Ascending aorta (tissue), 2 donors: ENCODE measurements at regions of chrX and their contacts with region 1.

Region 1: GRCh38 chrX:83630662-83631061 is 122.6 kb downstream of the POU3F4 start:
- DNase-seq: no peak
- H3K4me3 ChIP-seq: no peak overlapping the region
- H3K27ac ChIP-seq: no peak overlapping the region
- H3K4me1 ChIP-seq: no peaks in the 10 kb centered on the region
- H3K27me3 ChIP-seq: no peaks in the 10 kb centered on the region
- CTCF ChIP-seq: no peak

Region 2: DNA sequence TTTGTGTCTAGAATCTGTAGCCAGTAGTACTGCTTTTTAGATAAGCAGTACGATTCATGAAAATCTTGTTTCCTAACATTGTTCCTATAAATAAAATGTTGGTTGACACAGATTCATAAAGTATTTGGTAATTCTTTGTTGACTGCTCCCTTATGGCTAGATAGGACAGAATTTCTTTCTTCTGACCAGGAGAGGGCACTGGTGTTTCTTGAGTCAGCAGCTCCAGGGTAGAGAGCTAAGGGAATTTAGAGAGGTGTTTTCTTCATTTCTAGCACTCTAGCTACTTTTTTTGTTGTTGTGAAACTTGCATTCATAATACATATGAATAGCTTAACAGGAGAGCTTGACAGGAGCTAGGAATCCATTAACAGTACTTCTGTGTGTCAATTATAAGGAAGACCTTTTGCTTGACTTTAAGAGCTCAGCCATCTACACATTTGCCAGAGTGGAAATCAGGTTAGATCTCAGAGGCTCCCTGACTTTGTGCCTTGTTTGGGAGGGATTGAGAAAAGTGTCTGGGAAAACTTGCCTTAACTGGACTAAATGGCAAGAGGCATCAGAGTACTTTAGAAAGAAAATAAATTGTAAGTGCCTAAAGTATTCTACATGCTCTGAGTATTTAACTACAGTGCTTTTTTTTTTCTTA is 1672.6 kb before region 1 on chrX:
- intact Hi-C with region 1: loop called (anchors 5 kb)
- DNase-seq: no peak
- H3K4me3 ChIP-seq: no peak overlapping the region
- H3K27ac ChIP-seq: no peak overlapping the region
- H3K4me1 ChIP-seq: no peaks in the 10 kb centered on the region
- H3K27me3 ChIP-seq: no peaks in the 10 kb centered on the region
- CTCF ChIP-seq: peak in 2 of 3 experiments; percentile 24 to 37

Region 3: DNA sequence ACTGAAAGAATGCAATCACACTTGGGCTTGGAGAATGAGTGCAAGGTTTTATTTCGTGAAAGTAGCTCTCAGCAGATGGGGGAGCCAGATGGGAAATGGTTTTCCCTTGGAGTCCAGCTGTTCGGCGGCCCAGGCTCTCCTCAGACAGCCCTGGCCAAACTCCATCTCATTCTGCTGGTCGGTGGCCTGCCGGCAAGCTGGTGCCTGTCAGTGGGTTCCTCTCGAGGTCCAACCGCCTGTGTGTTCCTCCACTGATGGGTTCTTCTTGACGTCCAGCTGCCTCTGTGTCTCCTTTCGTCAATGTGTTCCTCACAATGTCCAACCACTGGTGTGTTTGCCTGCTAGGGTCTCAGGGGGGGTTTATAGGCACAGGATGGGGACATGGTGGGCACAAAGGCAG is 42.3 kb before region 1 on chrX:
- intact Hi-C with region 1: no loop called
- DNase-seq: no peak
- H3K4me3 ChIP-seq: no peak overlapping the region
- H3K27ac ChIP-seq: no peak overlapping the region
- H3K4me1 ChIP-seq: no peaks in the 10 kb centered on the region
- H3K27me3 ChIP-seq: no peaks in the 10 kb centered on the region
- CTCF ChIP-seq: no peak